Caco-2 (cell line): ENCODE measurements at regions of chr1 and their contacts with region 1.

Region 1: DNA sequence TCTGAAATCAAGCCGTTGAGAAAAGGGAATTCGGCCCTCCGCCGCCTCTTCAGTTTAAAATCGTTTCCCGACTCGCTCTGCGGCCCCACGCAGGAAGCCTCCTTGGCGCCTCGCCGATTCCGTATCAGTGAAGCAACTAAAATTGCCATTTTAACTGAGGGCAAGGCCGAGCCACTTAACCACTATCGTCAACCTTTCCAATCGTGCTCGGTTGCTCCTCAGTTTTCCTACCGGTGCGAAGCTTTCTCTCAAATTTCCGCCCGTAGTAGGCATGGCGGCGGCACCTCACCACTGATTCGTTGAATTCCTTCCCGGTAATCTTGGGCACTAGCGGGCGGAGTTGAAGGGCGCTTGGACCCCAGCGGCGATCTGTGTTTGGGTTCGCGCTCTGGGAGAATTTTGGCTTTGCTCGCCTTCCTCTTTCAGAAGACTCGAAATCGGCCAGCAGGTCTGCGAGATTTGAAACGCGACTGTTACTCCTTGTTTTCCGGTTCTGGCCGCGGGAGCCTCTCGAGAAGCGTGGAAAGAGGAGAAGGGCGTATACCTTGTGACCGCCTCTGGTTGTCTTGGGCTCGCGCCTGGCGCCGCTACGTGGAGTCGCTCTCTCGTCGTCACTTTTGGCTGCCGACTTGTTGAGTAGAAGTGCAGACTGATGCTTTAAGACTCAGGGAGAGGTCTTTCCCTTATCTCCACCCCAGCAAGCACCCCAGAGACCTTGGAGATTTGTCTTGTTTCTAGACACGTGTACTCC is at the starts of genes CENPL and DARS2:
- DNase-seq: peak; percentile 93 to 95
- H3K4me3 ChIP-seq: peak within 1 kb of the TSS; percentile 89
- H3K4me3 Mint-ChIP-seq: peak within 1 kb of the TSS; percentile 100
- H3K27ac Mint-ChIP-seq: peak within 1 kb of the TSS; percentile 100
- H3K4me1 ChIP-seq: peaks cover 4% of the 10 kb centered on the region; the same call in 1 of the 2 replicates
- H3K4me1 Mint-ChIP-seq: peaks cover 23% of the 10 kb centered on the region
- H3K27me3 ChIP-seq: no peaks in the 10 kb centered on the region
- H3K27me3 Mint-ChIP-seq: no peaks in the 10 kb centered on the region
- CTCF ChIP-seq: no peak
- total RNA-seq, gene CENPL: 21.3 and 23.1 TPM in 2 replicates
- total RNA-seq, gene DARS2: 41.3 and 45.1 TPM in 2 replicates

Region 2: DNA sequence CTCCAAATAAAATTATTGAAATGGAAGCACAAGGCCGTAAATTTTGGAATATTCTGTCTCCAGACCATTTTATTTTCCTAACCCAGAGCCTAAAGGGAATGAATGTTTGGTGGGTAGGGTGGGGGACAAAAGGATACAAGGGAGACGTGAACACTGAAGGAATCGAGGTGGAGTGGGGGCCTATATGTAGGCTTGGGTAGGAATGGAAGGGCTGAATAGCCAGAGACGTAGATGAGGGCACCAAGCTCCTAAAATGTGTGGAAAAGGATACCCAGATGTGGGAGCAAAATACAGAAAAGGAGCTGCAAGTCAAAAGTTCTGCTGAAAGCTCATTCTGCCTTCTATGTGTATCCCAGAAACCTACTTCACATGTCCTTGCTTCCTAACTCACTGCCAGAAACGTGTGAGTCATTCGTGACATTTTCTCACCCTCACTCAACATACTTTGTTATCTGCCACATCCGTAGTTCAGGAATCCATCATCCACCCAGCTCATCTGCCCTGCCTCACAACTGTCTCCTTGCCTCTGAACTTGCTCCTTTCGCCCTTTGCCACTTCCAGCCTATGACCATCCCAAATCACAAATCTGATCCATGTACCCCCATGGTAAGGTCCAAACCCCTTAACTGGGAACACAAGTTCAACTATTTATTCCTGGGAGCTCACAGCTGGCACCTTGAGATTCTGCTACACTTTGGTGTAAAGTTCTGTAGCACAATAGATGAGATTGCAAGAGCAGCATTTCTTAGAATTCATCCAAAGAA is 431.4 kb before region 1 on chr1:
- CTCF ChIA-PET with region 1: interaction called, 11 read pairs
- POLR2A ChIA-PET with region 1: no interaction called
- intact Hi-C with region 1: no loop called
- DNase-seq: no peak
- H3K4me3 ChIP-seq: no peak overlapping the region
- H3K4me3 Mint-ChIP-seq: no peak overlapping the region
- H3K27ac Mint-ChIP-seq: no peak overlapping the region
- H3K4me1 ChIP-seq: no peaks in the 10 kb centered on the region
- H3K4me1 Mint-ChIP-seq: peaks cover 6% of the 10 kb centered on the region
- H3K27me3 ChIP-seq: no peaks in the 10 kb centered on the region
- H3K27me3 Mint-ChIP-seq: no peaks in the 10 kb centered on the region
- CTCF ChIP-seq: no peak

Region 3: GRCh38 chr1:173476664-173477285 is 347.7 kb before region 1 on chr1:
- CTCF ChIA-PET with region 1: no interaction called
- POLR2A ChIA-PET with region 1: interaction called, 3 read pairs
- intact Hi-C with region 1: loop called (anchors 1 kb)
- DNase-seq: peak; percentile 92 to 95
- H3K4me3 ChIP-seq: peak overlapping the region; percentile 89
- H3K4me3 Mint-ChIP-seq: peak overlapping the region; percentile 93
- H3K27ac Mint-ChIP-seq: peak overlapping the region; percentile 97
- H3K4me1 ChIP-seq: peaks cover 32% of the 10 kb centered on the region
- H3K4me1 Mint-ChIP-seq: peaks cover 41% of the 10 kb centered on the region
- H3K27me3 ChIP-seq: no peaks in the 10 kb centered on the region
- H3K27me3 Mint-ChIP-seq: no peaks in the 10 kb centered on the region
- CTCF ChIP-seq: no peak

Region 4: GRCh38 chr1:173714759-173715537 is 109.6 kb before region 1 on chr1 and contains the start of gene KLHL20:
- CTCF ChIA-PET with region 1: no interaction called
- POLR2A ChIA-PET with region 1: interaction called, 7 read pairs
- intact Hi-C with region 1: loop called (anchors 1 kb)
- DNase-seq: peak; percentile 90 to 91
- H3K4me3 ChIP-seq: peak within 1 kb of the TSS; percentile 90
- H3K4me3 Mint-ChIP-seq: peak within 1 kb of the TSS; percentile 79
- H3K27ac Mint-ChIP-seq: peak within 1 kb of the TSS; percentile 75
- H3K4me1 ChIP-seq: peaks cover 4% of the 10 kb centered on the region; the same call in 1 of the 2 replicates
- H3K4me1 Mint-ChIP-seq: peaks cover 7% of the 10 kb centered on the region
- H3K27me3 ChIP-seq: no peaks in the 10 kb centered on the region
- H3K27me3 Mint-ChIP-seq: no peaks in the 10 kb centered on the region
- CTCF ChIP-seq: no peak
- total RNA-seq, gene KLHL20: 11.7 and 12.8 TPM in 2 replicates

Region 5: DNA sequence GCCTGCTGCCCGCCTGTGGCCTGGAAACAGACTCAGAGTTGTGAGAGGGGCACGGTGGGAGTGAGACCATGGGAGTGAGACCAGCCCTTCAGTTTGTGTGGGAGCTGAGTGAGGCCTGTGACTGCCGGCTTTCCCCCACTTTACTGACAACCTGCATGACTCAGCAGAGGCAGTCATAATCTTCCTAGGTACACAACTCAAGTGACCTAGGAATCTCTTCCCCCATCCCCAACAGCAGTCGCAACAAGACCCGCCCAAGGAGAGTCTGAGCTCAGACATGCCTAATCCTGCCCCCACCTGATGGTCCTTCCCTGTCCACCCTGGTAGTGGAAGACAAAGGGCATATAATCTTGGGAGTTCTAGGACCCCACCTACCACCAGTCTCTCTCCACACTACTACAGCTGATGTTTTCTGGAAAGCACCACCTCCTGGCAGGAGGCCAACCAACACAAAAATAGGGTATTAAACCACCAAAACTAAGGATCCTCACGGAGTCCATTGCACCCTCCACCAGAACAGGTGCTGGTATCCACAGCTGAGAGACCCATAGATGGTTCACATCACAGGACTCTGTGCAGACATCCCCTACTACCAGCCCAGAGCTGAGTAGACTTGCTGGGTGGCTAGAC is 65.4 kb before region 1 on chr1:
- CTCF ChIA-PET with region 1: no interaction called
- POLR2A ChIA-PET with region 1: no interaction called
- intact Hi-C with region 1: no loop called
- DNase-seq: no peak
- H3K4me3 ChIP-seq: no peak overlapping the region
- H3K4me3 Mint-ChIP-seq: no peak overlapping the region
- H3K27ac Mint-ChIP-seq: no peak overlapping the region
- H3K4me1 ChIP-seq: no peaks in the 10 kb centered on the region
- H3K4me1 Mint-ChIP-seq: no peaks in the 10 kb centered on the region
- H3K27me3 ChIP-seq: no peaks in the 10 kb centered on the region
- H3K27me3 Mint-ChIP-seq: no peaks in the 10 kb centered on the region
- CTCF ChIP-seq: no peak

Region 6: DNA sequence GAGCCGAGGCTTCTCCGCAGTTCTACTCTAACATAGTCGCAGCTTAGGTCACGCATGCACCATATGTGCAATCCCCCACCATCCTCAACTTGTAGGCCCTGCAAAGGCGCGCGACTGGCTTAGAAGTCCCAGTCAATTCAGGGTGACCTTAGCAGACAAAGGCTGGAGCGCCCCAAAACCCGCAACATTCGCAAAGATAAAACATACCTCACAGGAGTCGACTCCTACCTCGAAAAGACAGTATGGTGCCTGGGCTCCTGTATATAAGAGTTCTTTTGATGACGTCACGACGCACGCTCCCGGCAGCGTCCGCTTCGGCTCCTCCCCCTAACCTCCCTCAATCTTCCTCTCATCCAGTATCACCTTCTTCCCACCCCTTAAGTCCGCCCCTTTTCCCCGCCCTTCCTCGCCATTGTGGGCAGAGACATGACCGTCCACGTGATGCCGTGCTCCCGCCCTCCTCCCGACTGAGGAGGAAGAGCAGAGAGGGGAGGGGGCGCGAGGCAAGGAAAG is 43.3 kb after region 1 on chr1 and contains the start of gene GAS5:
- CTCF ChIA-PET with region 1: no interaction called
- POLR2A ChIA-PET with region 1: interaction called, 15 read pairs
- intact Hi-C with region 1: loop called (anchors 1 kb)
- DNase-seq: peak; percentile 99 to 100
- H3K4me3 ChIP-seq: peak within 1 kb of the TSS; percentile 82
- H3K4me3 Mint-ChIP-seq: peak within 1 kb of the TSS; percentile 99
- H3K27ac Mint-ChIP-seq: peak within 1 kb of the TSS; percentile 100
- H3K4me1 ChIP-seq: peaks cover 13% of the 10 kb centered on the region; the same call in 1 of the 2 replicates
- H3K4me1 Mint-ChIP-seq: peaks cover 12% of the 10 kb centered on the region
- H3K27me3 ChIP-seq: no peaks in the 10 kb centered on the region
- H3K27me3 Mint-ChIP-seq: peaks cover 5% of the 10 kb centered on the region
- CTCF ChIP-seq: no peak
- total RNA-seq, gene GAS5: 559 and 641 TPM in 2 replicates